Activated CD4-positive, alpha-beta T cell treated with anti-CD3 and anti-CD28 coated beads, Interleukin-2, amount 10 ng/mL, durations not matched to agents 7 days and 5 days (primary cell): ENCODE measurements at regions of chr16 and their contacts with region 1.

Region 1: DNA sequence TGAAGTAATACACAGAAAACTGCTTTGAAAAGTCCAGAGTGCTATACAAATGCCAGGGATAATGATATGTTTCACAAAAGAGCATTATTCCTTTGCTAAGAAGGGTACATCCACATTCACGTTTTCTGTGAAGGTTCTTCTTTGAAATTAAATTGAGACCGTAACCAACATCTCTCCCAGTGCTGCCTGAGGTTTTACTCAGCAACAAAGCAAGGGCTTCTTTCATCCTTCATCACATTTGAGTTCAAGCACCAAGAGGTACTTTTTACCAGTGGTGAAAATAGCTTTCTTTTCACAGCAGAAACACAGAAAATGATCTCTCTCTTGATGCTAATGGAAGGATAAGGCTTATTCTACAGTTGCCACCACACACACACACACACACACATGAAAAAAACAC is 113.3 kb downstream of the TOX3 start:
- DNase-seq: no peak
- H3K4me3 Mint-ChIP-seq: no peak overlapping the region
- H3K27ac Mint-ChIP-seq: no peak overlapping the region
- H3K4me1 Mint-ChIP-seq: no peaks in the 10 kb centered on the region
- H3K27me3 Mint-ChIP-seq: no peaks in the 10 kb centered on the region

Region 2: DNA sequence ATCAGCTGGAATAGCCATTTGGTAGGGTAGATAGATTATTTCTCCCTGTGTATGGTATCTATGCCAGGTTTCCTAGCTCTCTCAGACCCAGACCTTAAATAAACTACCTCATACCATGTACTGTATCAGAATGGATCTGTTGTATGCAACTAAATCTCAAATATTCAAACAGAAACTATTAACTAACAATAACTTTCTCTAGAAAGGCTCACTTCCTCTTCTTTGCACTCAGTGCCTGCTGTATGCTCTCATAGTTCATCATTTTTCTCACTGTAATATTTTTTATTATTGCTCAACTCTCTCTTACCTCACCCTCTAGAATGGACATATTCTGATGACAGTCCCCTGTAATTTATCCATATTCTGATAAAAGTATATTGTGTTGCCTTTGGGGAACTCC is 69.1 kb before region 1 on chr16:
- CTCF ChIA-PET with region 1: no interaction called
- POLR2A ChIA-PET with region 1: no interaction called
- DNase-seq: no peak
- H3K4me3 Mint-ChIP-seq: no peak overlapping the region
- H3K27ac Mint-ChIP-seq: no peak overlapping the region
- H3K4me1 Mint-ChIP-seq: no peaks in the 10 kb centered on the region
- H3K27me3 Mint-ChIP-seq: no peaks in the 10 kb centered on the region

Region 3: GRCh38 chr16:52422307-52422706 is 11.3 kb before region 1 on chr16:
- CTCF ChIA-PET with region 1: no interaction called
- POLR2A ChIA-PET with region 1: no interaction called
- DNase-seq: no peak
- H3K4me3 Mint-ChIP-seq: no peak overlapping the region
- H3K27ac Mint-ChIP-seq: no peak overlapping the region
- H3K4me1 Mint-ChIP-seq: no peaks in the 10 kb centered on the region
- H3K27me3 Mint-ChIP-seq: no peaks in the 10 kb centered on the region

Region 4: GRCh38 chr16:52515068-52515671 is 81.5 kb after region 1 on chr16:
- CTCF ChIA-PET with region 1: no interaction called
- POLR2A ChIA-PET with region 1: interaction called, 12 read pairs
- DNase-seq: no peak
- H3K4me3 Mint-ChIP-seq: no peak overlapping the region
- H3K27ac Mint-ChIP-seq: no peak overlapping the region
- H3K4me1 Mint-ChIP-seq: no peaks in the 10 kb centered on the region
- H3K27me3 Mint-ChIP-seq: no peaks in the 10 kb centered on the region